Calu3 (cell line): ENCODE measurements at regions of chr13 and their contacts with region 1.

Region 1: GRCh38 chr13:50376895-50377575 is 361.8 kb downstream of the KCNRG start:
- DNase-seq: peak; percentile 3
- H3K4me3 Mint-ChIP-seq: no peak overlapping the region
- H3K27ac Mint-ChIP-seq: no peak overlapping the region
- H3K4me1 Mint-ChIP-seq: peaks cover 6% of the 10 kb centered on the region
- H3K27me3 Mint-ChIP-seq: no peaks in the 10 kb centered on the region
- CTCF ChIP-seq: no peak

Region 2: DNA sequence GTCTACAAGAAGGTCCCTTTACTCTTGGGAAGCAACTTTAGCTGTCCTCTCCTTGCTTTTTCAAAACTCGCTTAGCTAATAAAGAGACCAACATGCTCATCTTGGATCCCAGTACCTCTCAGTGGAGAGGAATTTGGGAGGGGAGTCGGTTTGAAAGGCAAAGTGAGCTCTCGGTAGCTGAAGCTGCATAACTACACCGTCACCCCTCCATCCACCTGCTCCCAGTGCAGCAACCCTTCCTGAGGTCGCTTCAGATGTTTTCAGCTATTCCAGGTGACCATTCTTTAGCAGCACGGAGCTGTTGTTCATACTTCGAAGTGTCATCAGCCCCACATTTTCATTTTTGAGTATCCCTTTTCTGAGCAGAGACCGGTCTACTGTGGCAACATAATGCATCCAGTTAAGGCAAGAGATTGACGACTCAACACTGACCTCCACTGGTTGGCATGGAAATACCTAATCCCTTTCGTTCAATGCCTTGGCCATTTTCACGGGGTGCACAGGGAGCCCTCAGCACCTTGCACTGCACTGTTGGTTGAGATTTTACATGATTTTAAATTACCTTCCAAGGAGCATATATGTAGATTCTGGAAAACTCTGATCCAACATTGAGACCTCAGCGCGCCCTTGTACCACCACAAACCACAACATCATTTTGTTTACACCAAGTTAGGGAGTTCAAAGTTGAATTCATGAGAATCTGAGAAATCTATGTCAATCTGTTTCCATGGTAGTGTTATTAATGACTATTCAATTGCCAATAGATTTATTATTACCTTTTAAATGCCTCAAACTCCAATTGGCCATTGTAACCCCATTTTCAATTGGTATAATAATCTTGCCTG is 424.3 kb after region 1 on chr13:
- CTCF ChIA-PET with region 1: no interaction called
- intact Hi-C with region 1: loop called (anchors 2 kb)
- DNase-seq: peak; percentile 63
- H3K4me3 Mint-ChIP-seq: no peak overlapping the region
- H3K27ac Mint-ChIP-seq: no peak overlapping the region
- H3K4me1 Mint-ChIP-seq: no peaks in the 10 kb centered on the region
- H3K27me3 Mint-ChIP-seq: peaks cover 14% of the 10 kb centered on the region
- CTCF ChIP-seq: peak; percentile 35